MCF 10A (cell line): ENCODE measurements at regions of chr3 and their contacts with region 1.

Region 1: GRCh38 chr3:183285828-183286457 is 32.9 kb downstream of the B3GNT5 start:
- DNase-seq: peak; percentile 99
- H3K4me3 Mint-ChIP-seq: peak overlapping the region; percentile 48
- H3K27ac Mint-ChIP-seq: peak overlapping the region; percentile 91
- H3K4me1 Mint-ChIP-seq: peaks cover 31% of the 10 kb centered on the region
- H3K27me3 Mint-ChIP-seq: no peaks in the 10 kb centered on the region
- CTCF ChIP-seq: no peak

Region 2: GRCh38 chr3:183265834-183266417 is 20.0 kb before region 1 on chr3:
- CTCF ChIA-PET with region 1: interaction called, 4 read pairs
- POLR2A ChIA-PET with region 1: interaction called, 219 read pairs
- intact Hi-C with region 1: no loop called
- DNase-seq: peak; percentile 96
- H3K4me3 Mint-ChIP-seq: no peak overlapping the region
- H3K27ac Mint-ChIP-seq: no peak overlapping the region
- H3K4me1 Mint-ChIP-seq: peaks cover 24% of the 10 kb centered on the region
- H3K27me3 Mint-ChIP-seq: no peaks in the 10 kb centered on the region
- CTCF ChIP-seq: no peak